ENCODE measurements at regions of chr7 and their contacts with region 1.

Region 1: GRCh38 chr7:43533801-43534479 is 49.0 kb upstream of the STK17A start:
- DNase-seq: no peak
- ATAC-seq: no peak

Region 2: GRCh38 chr7:43362652-43363034 is 171.3 kb before region 1 on chr7:
- intact Hi-C with region 1: loop called in 1 of 2 experiments (anchors 5 kb)
- DNase-seq: peak; percentile 23
- ATAC-seq: no peak